ENCODE measurements at regions of chr7 and their contacts with region 1.

Region 1: GRCh38 chr7:18666107-18666728 is 170.7 kb downstream of the HDAC9 start:
- DNase-seq: peak in 8 of 9 donors; percentile 1 to 63 (median 15)
- ATAC-seq: peak; percentile 81
- H3K4me3 ChIP-seq: no peak overlapping the region
- H3K4me3 Mint-ChIP-seq: no peak overlapping the region
- H3K27ac ChIP-seq: no peak overlapping the region
- H3K27ac Mint-ChIP-seq: peak overlapping the region in 1 of 9 donors; percentile 6
- H3K4me1 ChIP-seq: no peaks in the 10 kb centered on the region
- H3K4me1 Mint-ChIP-seq: peaks cover 0 to 5% (median 0%) of the 10 kb centered on the region in 7 donors
- H3K27me3 ChIP-seq: no peaks in the 10 kb centered on the region
- H3K27me3 Mint-ChIP-seq: no peaks in the 10 kb centered on the region

Region 2: GRCh38 chr7:17680943-17681351 is 985.3 kb before region 1 on chr7:
- CTCF ChIA-PET with region 1: no interaction called
- POLR2A ChIA-PET with region 1: no interaction called
- intact Hi-C with region 1: loop called in 1 of 2 experiments (anchors 1 kb)
- DNase-seq: peak in 4 of 9 donors; percentile 12 to 35 (median 18)
- ATAC-seq: no peak
- H3K4me3 ChIP-seq: no peak overlapping the region
- H3K4me3 Mint-ChIP-seq: no peak overlapping the region
- H3K27ac ChIP-seq: no peak overlapping the region
- H3K27ac Mint-ChIP-seq: no peak overlapping the region
- H3K4me1 ChIP-seq: no peaks in the 10 kb centered on the region
- H3K4me1 Mint-ChIP-seq: no peaks in the 10 kb centered on the region
- H3K27me3 ChIP-seq: no peaks in the 10 kb centered on the region
- H3K27me3 Mint-ChIP-seq: peaks cover 0 to 2% (median 0%) of the 10 kb centered on the region in 5 donors

Region 3: DNA sequence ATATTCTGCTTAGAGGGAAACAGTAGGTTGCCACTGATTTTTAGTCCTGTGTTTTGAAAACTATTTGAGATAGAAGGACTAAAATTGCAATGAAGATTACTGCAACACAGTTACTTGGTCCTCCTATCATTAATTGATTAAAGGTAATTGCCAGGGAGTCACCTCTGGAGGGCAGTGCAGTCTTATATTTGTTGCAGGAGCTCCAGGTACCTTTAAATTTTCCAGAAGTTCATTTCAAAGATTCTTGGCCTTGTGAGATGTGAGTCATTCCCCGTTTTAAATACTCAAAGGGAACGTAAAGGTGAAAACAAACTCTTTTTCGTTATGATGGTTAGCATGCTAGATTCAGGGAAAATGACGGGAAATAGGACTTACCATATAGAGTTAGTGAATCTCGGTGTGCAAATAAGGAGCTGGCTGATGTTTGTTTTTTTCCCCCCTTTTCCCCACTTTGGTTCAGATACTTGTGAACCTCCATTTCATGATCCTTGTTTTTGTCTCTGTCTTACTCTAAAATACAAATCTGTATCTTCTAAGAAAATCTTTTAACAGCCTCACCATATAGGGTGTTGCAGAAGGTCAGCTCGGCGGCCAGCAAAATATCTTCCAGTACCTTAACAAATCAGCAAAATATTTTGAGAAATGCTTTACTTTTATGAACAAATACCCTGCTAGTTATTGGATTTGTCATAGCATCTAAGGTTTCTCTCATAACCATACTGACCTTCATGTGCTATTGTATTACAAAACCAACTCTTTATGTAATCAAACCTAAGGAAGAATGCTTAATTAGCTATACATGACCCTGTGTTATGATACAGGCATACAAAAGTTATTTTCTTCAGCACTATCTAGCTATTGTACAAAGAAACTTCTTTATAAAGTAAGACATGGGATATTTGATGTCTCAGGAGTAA is 313.6 kb before region 1 on chr7:
- CTCF ChIA-PET with region 1: no interaction called
- POLR2A ChIA-PET with region 1: no interaction called
- intact Hi-C with region 1: loop called in 1 of 2 experiments (anchors 1 kb)
- DNase-seq: no peak
- ATAC-seq: no peak
- H3K4me3 ChIP-seq: no peak overlapping the region
- H3K4me3 Mint-ChIP-seq: no peak overlapping the region
- H3K27ac ChIP-seq: no peak overlapping the region
- H3K27ac Mint-ChIP-seq: no peak overlapping the region
- H3K4me1 ChIP-seq: no peaks in the 10 kb centered on the region
- H3K4me1 Mint-ChIP-seq: peaks cover 0 to 12% (median 6%) of the 10 kb centered on the region in 7 donors
- H3K27me3 ChIP-seq: no peaks in the 10 kb centered on the region
- H3K27me3 Mint-ChIP-seq: peaks cover 0 to 13% (median 4%) of the 10 kb centered on the region in 5 donors

Region 4: GRCh38 chr7:18357691-18358090 is 308.5 kb before region 1 on chr7:
- CTCF ChIA-PET with region 1: no interaction called
- POLR2A ChIA-PET with region 1: no interaction called
- intact Hi-C with region 1: loop called in 1 of 2 experiments (anchors 1 kb)
- DNase-seq: no peak
- ATAC-seq: no peak
- H3K4me3 ChIP-seq: no peak overlapping the region
- H3K4me3 Mint-ChIP-seq: no peak overlapping the region
- H3K27ac ChIP-seq: no peak overlapping the region
- H3K27ac Mint-ChIP-seq: no peak overlapping the region
- H3K4me1 ChIP-seq: no peaks in the 10 kb centered on the region
- H3K4me1 Mint-ChIP-seq: peaks cover 0 to 12% (median 6%) of the 10 kb centered on the region in 7 donors
- H3K27me3 ChIP-seq: no peaks in the 10 kb centered on the region
- H3K27me3 Mint-ChIP-seq: peaks cover 0 to 6% (median 0%) of the 10 kb centered on the region in 5 donors

Region 5: DNA sequence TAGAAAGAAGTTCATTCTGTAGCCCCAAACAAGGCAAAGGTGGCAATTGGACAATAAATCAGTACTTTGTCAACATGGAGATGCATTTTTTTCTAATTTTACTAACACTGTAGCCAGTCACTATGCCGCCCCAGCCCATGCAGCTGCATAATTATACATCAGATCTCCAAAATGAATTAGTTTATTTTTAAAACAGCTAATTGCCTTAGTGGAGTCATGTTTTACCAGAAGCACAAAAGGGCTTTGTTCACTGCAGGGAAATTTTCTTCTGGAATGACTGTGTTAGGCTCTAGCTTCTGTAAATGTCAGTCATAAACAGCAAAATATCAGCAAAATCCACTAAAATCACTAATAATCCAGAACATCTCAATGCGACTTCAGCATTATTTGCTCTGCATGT is 190.7 kb before region 1 on chr7:
- CTCF ChIA-PET with region 1: no interaction called
- POLR2A ChIA-PET with region 1: no interaction called
- intact Hi-C with region 1: no loop called
- DNase-seq: no peak
- ATAC-seq: no peak
- H3K4me3 ChIP-seq: no peak overlapping the region
- H3K4me3 Mint-ChIP-seq: no peak overlapping the region
- H3K27ac ChIP-seq: no peak overlapping the region
- H3K27ac Mint-ChIP-seq: no peak overlapping the region
- H3K4me1 ChIP-seq: no peaks in the 10 kb centered on the region
- H3K4me1 Mint-ChIP-seq: no peaks in the 10 kb centered on the region
- H3K27me3 ChIP-seq: no peaks in the 10 kb centered on the region
- H3K27me3 Mint-ChIP-seq: no peaks in the 10 kb centered on the region

Region 6: DNA sequence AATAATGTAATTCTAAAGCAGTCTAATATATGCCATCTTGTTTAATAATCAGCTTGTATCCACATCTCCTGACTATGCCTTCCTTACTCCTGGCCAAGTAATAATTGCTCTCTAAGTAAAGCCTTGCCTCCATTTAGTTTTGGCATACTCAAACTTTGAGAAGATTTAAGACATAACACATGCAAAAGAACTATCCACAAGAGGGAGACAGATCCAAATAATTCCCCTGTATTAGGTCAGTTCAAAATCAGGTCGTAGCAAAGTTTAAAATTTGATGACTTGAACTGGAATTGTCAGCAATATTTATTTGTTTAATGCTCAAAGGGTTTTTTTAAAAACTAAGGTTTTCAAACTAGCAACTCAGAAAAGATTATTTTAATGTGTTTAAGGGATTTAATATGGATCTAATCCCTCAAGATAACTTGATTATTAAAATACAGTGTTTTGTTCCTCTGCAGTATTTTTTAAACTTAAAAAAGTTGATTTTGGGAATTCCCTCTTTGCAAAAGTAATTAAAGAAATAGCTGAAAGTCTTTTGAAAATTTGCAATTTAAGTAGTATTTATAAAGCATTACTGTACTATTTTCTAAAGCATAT is 75.4 kb before region 1 on chr7:
- CTCF ChIA-PET with region 1: no interaction called
- POLR2A ChIA-PET with region 1: no interaction called
- intact Hi-C with region 1: loop called in 1 of 2 experiments (anchors 1 kb)
- DNase-seq: no peak
- ATAC-seq: no peak
- H3K4me3 ChIP-seq: no peak overlapping the region
- H3K4me3 Mint-ChIP-seq: no peak overlapping the region
- H3K27ac ChIP-seq: no peak overlapping the region
- H3K27ac Mint-ChIP-seq: no peak overlapping the region
- H3K4me1 ChIP-seq: no peaks in the 10 kb centered on the region
- H3K4me1 Mint-ChIP-seq: peaks cover 0 to 5% (median 0%) of the 10 kb centered on the region in 7 donors
- H3K27me3 ChIP-seq: no peaks in the 10 kb centered on the region
- H3K27me3 Mint-ChIP-seq: no peaks in the 10 kb centered on the region